ENCODE measurements at regions of chr18 and their contacts with region 1.

Region 1: GRCh38 chr18:46073474-46074331 is 1.6 kb upstream of the PSTPIP2 start:
- DNase-seq: peak; percentile 70
- H3K4me3 ChIP-seq: no peak overlapping the region
- H3K27ac ChIP-seq: no peak overlapping the region
- H3K4me1 ChIP-seq: peaks cover 6% of the 10 kb centered on the region
- H3K27me3 ChIP-seq: no peaks in the 10 kb centered on the region
- CTCF ChIP-seq: peak; percentile 43

Region 2: DNA sequence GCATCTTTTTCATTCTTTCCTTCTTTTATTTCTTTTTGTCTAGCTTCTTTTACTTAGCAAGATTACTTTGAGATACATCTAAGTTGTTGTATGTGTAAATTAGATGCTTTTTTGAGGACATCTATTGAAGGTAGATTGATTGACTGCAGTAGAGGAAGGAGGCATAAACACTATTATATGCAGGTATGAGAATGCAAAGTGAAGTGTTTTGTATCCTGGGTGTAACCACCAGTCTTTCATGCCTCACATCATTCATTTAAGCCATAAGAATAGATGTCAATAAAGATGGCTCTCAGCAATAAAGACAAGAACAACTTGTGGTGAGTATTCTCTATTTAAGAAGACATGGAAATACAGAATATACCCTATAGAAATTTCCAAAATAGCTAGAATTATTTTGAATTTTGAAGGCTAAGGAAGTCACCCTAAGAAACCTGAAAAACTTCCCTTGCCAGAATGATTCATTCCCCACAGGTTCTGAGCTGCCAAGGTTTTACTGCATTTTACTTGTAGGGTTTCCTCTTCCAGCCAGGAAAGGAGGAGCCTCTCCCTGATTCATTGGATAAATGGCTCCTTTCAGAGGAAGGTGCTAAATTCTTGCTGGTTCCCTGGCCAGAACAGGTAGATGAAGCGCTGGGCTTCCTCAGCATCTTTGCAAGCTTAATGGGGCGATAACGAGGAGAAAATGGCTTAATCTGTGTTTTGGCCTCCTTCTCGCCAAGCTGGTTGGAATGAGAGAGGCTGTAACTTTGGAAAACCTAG is 738.2 kb before region 1 on chr18:
- intact Hi-C with region 1: no loop called
- DNase-seq: no peak
- H3K4me3 ChIP-seq: no peak overlapping the region
- H3K27ac ChIP-seq: no peak overlapping the region
- H3K4me1 ChIP-seq: no peaks in the 10 kb centered on the region
- H3K27me3 ChIP-seq: no peaks in the 10 kb centered on the region
- CTCF ChIP-seq: no peak

Region 3: GRCh38 chr18:45416168-45416567 is 657.5 kb before region 1 on chr18:
- intact Hi-C with region 1: no loop called
- DNase-seq: peak; percentile 25
- H3K4me3 ChIP-seq: no peak overlapping the region
- H3K27ac ChIP-seq: no peak overlapping the region
- H3K4me1 ChIP-seq: no peaks in the 10 kb centered on the region
- H3K27me3 ChIP-seq: no peaks in the 10 kb centered on the region
- CTCF ChIP-seq: no peak

Region 4: DNA sequence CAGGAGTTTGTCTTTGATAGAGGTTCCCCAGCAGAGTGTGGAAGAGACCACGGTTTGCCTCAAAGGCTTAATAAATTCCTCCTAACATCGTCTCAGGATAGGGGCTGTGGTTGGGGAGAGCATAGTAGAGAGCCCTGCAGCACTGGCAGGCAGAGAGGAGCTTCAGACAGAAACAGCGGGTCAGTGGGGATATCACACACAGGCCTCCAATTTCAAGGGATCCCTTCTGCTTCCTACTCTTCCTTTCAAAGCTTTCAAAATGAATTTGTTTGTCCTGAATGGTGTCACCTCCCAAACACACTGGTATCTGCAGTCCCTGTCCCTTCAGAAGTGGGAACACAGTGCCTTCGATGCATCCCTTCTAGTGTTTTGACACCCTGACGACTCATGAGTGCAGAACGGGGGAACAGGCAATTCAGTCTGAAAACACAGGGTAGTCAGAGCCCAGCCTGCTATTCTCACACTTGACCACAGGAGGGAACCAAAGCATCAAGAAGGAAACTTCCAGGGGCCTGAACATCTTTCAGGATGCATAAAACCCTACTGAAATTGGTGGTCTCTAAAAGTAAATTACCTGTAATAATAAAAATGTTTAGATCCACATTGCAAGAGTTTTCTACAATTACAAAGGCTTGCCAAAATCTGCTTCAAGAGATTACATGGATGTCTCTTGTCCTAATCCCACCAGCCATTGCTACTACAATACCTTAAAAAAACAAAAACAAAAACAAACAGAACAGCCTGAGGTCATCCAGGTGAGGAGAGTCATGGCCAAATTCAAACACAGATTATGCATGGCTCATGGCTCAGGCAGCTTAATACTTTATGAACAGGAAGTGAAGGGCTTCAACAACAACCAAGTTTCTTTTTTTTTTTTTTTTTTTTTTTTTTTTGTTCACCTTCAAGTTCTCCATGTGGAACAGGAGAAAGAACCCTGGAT is 408.6 kb before region 1 on chr18:
- intact Hi-C with region 1: loop called (anchors 10 kb)
- DNase-seq: peak; percentile 61
- H3K4me3 ChIP-seq: no peak overlapping the region
- H3K27ac ChIP-seq: no peak overlapping the region
- H3K4me1 ChIP-seq: no peaks in the 10 kb centered on the region
- H3K27me3 ChIP-seq: no peaks in the 10 kb centered on the region
- CTCF ChIP-seq: peak; percentile 88

Region 5: GRCh38 chr18:45910405-45911023 is 163.2 kb before region 1 on chr18:
- intact Hi-C with region 1: loop called (anchors 10 kb)
- DNase-seq: peak; percentile 35
- H3K4me3 ChIP-seq: no peak overlapping the region
- H3K27ac ChIP-seq: no peak overlapping the region
- H3K4me1 ChIP-seq: no peaks in the 10 kb centered on the region
- H3K27me3 ChIP-seq: no peaks in the 10 kb centered on the region
- CTCF ChIP-seq: peak; percentile 68

Region 6: GRCh38 chr18:45967007-45967706 is 106.5 kb before region 1 on chr18 and contains the start of gene EPG5:
- intact Hi-C with region 1: loop called (anchors 5 kb)
- DNase-seq: peak; percentile 98
- H3K4me3 ChIP-seq: peak within 1 kb of the TSS; percentile 71
- H3K27ac ChIP-seq: peak within 1 kb of the TSS; percentile 43
- H3K4me1 ChIP-seq: no peaks in the 10 kb centered on the region
- H3K27me3 ChIP-seq: no peaks in the 10 kb centered on the region
- CTCF ChIP-seq: no peak
- total RNA-seq, gene EPG5: 16.0 to 17.3 TPM

Measured in colonic mucosa (tissue), 4 donors.